Lower lobe of right lung (tissue), 2 donors: ENCODE measurements at regions of chr11 and their contacts with region 1.

Region 1: GRCh38 chr11:117134431-117134830 is 9.7 kb upstream of the PAFAH1B2 start:
- DNase-seq: no peak
- ATAC-seq: no peak
- H3K4me3 ChIP-seq: no peak overlapping the region
- H3K27ac ChIP-seq: no peak overlapping the region
- H3K4me1 ChIP-seq: no peaks in the 10 kb centered on the region
- H3K27me3 ChIP-seq: no peaks in the 10 kb centered on the region
- CTCF ChIP-seq: no peak

Region 2: GRCh38 chr11:117205211-117205818 is 70.9 kb after region 1 on chr11:
- intact Hi-C with region 1: loop called (anchors 5 kb)
- DNase-seq: no peak
- ATAC-seq: no peak
- H3K4me3 ChIP-seq: no peak overlapping the region
- H3K27ac ChIP-seq: no peak overlapping the region
- H3K4me1 ChIP-seq: peaks cover 17% of the 10 kb centered on the region
- H3K27me3 ChIP-seq: no peaks in the 10 kb centered on the region
- CTCF ChIP-seq: no peak